ENCODE measurements at regions of chr3 and their contacts with region 1.

Region 1: DNA sequence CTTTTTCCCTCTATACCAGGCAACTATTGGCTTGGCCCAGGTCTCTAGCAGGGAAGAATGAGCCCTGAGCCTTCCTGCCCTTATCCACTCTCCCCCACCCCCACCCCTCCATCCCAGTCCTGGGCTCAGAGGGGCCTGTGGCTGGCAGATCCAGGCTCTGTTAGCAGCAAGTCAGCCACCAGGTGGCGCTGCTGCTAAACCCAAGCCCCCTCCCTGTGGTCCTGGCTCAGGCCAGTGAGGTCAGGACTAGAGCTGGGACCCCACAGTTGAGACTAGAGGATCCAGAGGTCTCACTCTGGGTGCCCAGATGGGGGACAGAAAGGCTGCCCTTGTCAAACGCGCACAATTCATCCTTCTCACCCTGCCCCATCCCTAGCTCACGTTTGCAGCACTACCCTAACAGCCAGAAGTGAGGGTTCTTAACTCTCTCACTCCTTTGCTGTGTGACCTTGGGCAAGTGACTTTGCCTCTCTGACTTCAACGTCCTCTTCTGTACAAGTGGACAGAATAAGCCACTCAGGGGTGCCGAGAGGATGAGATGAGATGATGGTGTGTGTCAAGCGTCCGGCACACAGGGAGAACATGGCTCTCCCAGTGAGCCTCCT is 46.8 kb upstream of the SLC6A1 start:
- DNase-seq: peak; percentile 70
- H3K4me3 Mint-ChIP-seq: no peak overlapping the region
- H3K27ac Mint-ChIP-seq: no peak overlapping the region
- H3K4me1 Mint-ChIP-seq: no peaks in the 10 kb centered on the region
- H3K27me3 Mint-ChIP-seq: peaks cover 22% of the 10 kb centered on the region
- CTCF ChIP-seq: peak; percentile 83

Region 2: GRCh38 chr3:10957976-10958749 is 12.4 kb after region 1 on chr3:
- CTCF ChIA-PET with region 1: interaction called, 48 read pairs
- POLR2A ChIA-PET with region 1: no interaction called
- intact Hi-C with region 1: no loop called
- DNase-seq: peak; percentile 15
- H3K4me3 Mint-ChIP-seq: no peak overlapping the region
- H3K27ac Mint-ChIP-seq: no peak overlapping the region
- H3K4me1 Mint-ChIP-seq: no peaks in the 10 kb centered on the region
- H3K27me3 Mint-ChIP-seq: peaks cover 48% of the 10 kb centered on the region
- CTCF ChIP-seq: no peak

Region 3: GRCh38 chr3:10983219-10983916 is 37.6 kb after region 1 on chr3:
- CTCF ChIA-PET with region 1: interaction called, 15 read pairs
- POLR2A ChIA-PET with region 1: no interaction called
- intact Hi-C with region 1: no loop called
- DNase-seq: peak; percentile 61
- H3K4me3 Mint-ChIP-seq: no peak overlapping the region
- H3K27ac Mint-ChIP-seq: no peak overlapping the region
- H3K4me1 Mint-ChIP-seq: peaks cover 11% of the 10 kb centered on the region
- H3K27me3 Mint-ChIP-seq: peaks cover 44% of the 10 kb centered on the region
- CTCF ChIP-seq: peak; percentile 63

Region 4: DNA sequence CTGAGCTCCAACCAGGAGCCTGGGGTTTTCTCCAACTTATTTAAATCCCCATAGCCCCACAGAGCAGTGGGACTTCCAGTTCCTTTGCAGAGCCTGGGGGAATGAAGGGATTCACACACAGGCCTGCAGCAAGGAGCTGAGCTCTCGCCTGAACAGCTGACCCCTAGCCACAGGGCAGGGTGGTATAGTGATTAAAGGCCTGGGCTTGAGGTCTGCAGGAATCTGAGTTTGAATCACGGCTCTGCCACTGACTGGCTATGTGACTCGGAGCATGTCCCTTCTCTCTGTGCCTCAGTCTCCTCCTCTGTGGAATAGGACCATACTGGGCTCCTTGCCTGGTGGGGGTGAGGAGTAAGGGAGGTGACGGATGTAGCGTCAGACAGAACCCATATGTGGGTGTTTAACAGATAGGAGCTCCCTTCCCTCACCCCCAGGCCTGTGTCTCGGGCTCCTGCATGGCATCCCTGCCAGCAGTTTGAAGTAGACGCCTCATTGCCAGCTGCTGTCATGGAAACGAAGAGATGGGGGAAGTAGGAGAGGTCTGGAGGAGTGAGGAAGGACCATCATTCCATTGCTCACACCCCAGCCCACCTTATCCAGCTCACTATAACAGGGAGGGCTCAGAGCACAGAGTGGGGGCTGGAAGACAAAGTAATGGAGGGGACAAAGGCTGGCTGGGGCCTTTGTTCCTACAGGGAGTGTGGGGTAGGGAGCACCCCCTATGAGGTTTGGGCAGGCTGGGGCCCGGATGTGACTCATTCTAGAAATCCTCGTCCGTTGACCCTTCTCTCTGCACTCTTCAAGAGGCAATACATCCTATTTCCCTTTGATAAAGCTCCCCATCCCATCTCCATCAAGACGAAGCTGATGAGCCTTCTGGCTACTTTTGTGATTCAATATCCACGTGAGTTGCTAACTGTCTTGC is 223.4 kb after region 1 on chr3:
- CTCF ChIA-PET with region 1: no interaction called
- POLR2A ChIA-PET with region 1: no interaction called
- intact Hi-C with region 1: no loop called
- DNase-seq: no peak
- H3K4me3 Mint-ChIP-seq: no peak overlapping the region
- H3K27ac Mint-ChIP-seq: no peak overlapping the region
- H3K4me1 Mint-ChIP-seq: peaks cover 11% of the 10 kb centered on the region
- H3K27me3 Mint-ChIP-seq: no peaks in the 10 kb centered on the region
- CTCF ChIP-seq: no peak